A673 (cell line): ENCODE measurements at regions of chr3 and their contacts with region 1.

Region 1: DNA sequence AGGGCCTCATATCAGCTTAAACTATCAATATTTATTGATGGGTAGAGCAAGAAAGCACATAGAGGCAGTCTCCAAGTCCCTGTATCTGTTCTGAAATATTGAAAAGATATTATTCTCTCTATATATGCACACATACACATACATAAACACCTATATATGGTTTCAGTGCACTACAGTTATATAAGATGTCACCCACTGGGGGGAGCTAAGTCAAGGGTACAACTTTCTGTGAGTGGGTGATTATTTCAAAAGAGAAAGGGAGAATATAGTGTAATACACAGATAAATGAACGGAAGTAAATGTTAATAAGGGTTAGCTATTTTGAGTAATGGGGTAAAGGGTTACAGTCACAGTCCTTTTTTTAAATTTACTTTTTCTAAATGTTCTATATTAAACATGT is 8.8 kb downstream of the SNTN start:
- DNase-seq: peak; percentile 23
- H3K4me3 ChIP-seq: no peak overlapping the region
- H3K27ac ChIP-seq: no peak overlapping the region
- H3K4me1 ChIP-seq: no peaks in the 10 kb centered on the region
- H3K27me3 ChIP-seq: no peaks in the 10 kb centered on the region
- CTCF ChIP-seq: peak; percentile 27; the same call in 1 of the 2 replicates

Region 2: GRCh38 chr3:63364910-63365431 is 296.3 kb before region 1 on chr3:
- CTCF ChIA-PET with region 1: no interaction called
- POLR2A ChIA-PET with region 1: no interaction called
- intact Hi-C with region 1: no loop called
- DNase-seq: peak; percentile 46
- H3K4me3 ChIP-seq: no peak overlapping the region
- H3K27ac ChIP-seq: no peak overlapping the region
- H3K4me1 ChIP-seq: peaks cover 6% of the 10 kb centered on the region
- H3K27me3 ChIP-seq: no peaks in the 10 kb centered on the region
- CTCF ChIP-seq: peak; percentile 58

Region 3: DNA sequence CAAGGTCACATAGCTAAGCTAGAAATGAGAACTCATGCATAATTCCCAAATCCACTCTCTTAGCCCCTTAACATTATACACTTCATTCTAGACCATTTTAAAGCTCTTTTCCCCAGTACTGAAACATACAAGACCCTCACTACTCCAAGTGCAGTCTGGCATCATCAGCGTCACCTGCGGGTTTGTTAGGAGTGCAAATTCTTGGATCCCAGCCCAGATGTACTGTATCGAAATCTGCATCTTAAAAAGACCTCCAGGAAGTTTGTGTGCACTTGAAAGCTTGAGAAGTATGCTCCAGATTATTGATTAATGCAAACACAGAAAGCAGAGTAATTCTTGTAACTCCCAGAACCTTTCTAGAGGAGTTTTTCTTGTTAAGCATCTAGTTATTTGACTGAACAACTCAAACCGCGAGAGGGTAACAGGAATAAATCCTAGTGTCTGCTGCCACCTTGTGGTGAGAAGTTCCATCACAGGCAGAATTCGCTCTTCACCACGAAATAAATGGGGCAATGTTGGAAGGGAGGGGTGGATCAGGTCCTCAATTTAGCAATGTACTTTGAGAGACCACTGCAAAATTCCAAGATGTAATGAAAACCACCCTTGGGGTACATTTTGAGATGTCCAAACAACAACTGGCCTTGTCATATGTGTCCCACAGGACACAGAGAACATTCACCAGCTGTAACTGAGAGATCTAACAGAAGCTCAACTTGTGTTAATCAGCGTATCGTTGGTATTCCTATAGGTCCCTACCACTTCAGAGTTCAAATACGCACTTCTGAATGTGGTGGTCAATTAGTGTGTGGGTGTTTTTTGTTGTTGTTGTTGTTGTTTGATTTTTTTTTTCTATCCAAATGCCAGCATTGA is 157.3 kb after region 1 on chr3:
- CTCF ChIA-PET with region 1: no interaction called
- POLR2A ChIA-PET with region 1: no interaction called
- intact Hi-C with region 1: loop called (anchors 5 kb)
- DNase-seq: peak; percentile 55
- H3K4me3 ChIP-seq: no peak overlapping the region
- H3K27ac ChIP-seq: no peak overlapping the region
- H3K4me1 ChIP-seq: no peaks in the 10 kb centered on the region
- H3K27me3 ChIP-seq: no peaks in the 10 kb centered on the region
- CTCF ChIP-seq: peak; percentile 67